ENCODE measurements at regions of chr3 and their contacts with region 1.

Region 1: DNA sequence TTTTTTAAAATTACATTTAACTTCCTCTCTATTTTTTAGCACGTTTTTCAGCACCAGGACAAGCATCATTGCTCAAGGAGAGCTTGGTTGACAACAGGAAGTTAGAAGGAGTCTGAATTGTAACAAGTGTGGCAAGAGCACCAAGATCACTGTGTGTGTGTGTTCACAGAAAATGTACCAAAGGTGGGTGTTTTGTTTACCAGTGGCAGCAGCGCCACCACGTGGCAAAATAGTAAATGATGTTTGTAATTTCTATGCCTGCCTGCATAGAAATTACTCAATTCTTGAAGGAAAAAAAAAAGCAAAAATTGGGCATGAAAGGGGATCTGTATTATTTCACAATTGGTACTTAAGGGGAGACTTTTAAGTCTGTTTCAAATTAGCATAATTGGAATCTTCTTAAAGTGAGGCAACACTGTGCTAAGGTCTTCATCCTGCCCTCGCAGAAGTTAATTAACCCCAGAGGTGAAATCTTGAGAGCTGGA is 7.4 kb upstream of the U2SURP start:
- DNase-seq: peak in 4 of 5 donors; percentile 32 to 67 (median 50)
- ATAC-seq: peak in 3 of 4 donors; percentile 30 to 50 (median 33)
- H3K4me3 ChIP-seq: no peak overlapping the region
- H3K27ac ChIP-seq: no peak overlapping the region
- H3K4me1 ChIP-seq: peaks cover 0 to 15% (median 0%) of the 10 kb centered on the region in 12 donors
- H3K27me3 ChIP-seq: no peaks in the 10 kb centered on the region
- CTCF ChIP-seq: peak; percentile 48 to 80 (median 70)
- POLR2A ChIP-seq: no peak

Region 2: DNA sequence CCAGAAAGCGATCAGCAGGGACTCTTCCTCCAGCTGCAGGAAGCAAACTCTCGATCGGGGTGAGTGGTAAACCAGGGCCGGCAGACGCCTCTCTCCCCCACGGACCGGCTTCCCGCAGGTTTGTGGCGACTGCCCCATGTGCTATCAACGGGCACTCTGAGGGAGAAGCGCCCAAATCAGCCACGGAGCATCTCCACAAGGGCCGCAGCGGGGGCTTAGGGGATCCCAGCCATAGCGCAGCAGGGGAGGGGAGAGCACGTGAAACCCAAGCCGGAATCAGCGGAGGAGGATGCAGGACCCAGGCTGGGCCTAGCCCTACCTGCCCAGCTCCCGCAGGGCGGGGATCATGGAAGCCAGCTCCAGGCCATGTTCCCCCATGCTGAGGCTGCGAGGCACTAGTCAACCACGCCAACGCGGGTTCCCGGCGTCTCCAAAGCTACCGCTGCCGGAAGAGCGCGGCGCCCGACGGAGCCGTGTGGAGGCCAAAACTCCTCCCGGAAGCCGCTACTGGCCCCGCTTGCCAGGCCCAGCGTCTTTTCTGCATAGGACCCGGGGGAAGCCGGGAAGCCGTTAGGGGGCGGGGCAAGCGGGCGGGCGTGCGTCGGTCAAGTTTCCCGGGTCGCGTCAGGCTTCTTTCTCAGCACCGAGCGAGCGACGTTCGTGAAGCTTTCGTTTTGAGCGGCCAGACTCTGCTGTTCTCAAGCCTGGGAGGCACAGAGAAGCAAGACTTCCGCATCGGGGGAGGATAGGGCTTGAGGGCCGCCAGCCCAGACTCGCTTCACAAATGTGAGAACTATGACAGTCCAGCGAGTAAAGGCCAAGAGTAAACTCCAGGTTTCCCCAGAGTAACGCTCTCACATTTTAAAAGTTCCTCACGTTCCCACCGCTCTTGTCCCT is 415.4 kb before region 1 on chr3 and contains the start of gene ATR:
- intact Hi-C with region 1: loop called in 1 of 10 experiments (anchors 2 kb)
- DNase-seq: peak; percentile 97 to 98 (median 98)
- ATAC-seq: peak; percentile 99
- H3K4me3 ChIP-seq: peak within 1 kb of the TSS; percentile 53 to 97 (median 88)
- H3K27ac ChIP-seq: peak within 1 kb of the TSS; percentile 72 to 97 (median 91)
- H3K4me1 ChIP-seq: peaks cover 0 to 50% (median 24%) of the 10 kb centered on the region in 12 donors
- H3K27me3 ChIP-seq: no peaks in the 10 kb centered on the region
- CTCF ChIP-seq: peak in 3 of 12 donors; percentile 8 to 18 (median 16)
- POLR2A ChIP-seq: no peak
- total RNA-seq, gene ATR: 10.3 to 17.0 (median 11.1) TPM

Region 3: GRCh38 chr3:142586803-142587406 is 407.1 kb before region 1 on chr3:
- intact Hi-C with region 1: loop called (anchors 2 to 5 kb)
- DNase-seq: peak in 1 of 5 donors; percentile 32
- ATAC-seq: peak; percentile 28 to 83 (median 74)
- H3K4me3 ChIP-seq: no peak overlapping the region
- H3K27ac ChIP-seq: no peak overlapping the region
- H3K4me1 ChIP-seq: no peaks in the 10 kb centered on the region
- H3K27me3 ChIP-seq: peaks cover 0 to 3% (median 0%) of the 10 kb centered on the region in 9 donors
- CTCF ChIP-seq: peak; percentile 43 to 70 (median 62)
- POLR2A ChIP-seq: no peak

Region 4: DNA sequence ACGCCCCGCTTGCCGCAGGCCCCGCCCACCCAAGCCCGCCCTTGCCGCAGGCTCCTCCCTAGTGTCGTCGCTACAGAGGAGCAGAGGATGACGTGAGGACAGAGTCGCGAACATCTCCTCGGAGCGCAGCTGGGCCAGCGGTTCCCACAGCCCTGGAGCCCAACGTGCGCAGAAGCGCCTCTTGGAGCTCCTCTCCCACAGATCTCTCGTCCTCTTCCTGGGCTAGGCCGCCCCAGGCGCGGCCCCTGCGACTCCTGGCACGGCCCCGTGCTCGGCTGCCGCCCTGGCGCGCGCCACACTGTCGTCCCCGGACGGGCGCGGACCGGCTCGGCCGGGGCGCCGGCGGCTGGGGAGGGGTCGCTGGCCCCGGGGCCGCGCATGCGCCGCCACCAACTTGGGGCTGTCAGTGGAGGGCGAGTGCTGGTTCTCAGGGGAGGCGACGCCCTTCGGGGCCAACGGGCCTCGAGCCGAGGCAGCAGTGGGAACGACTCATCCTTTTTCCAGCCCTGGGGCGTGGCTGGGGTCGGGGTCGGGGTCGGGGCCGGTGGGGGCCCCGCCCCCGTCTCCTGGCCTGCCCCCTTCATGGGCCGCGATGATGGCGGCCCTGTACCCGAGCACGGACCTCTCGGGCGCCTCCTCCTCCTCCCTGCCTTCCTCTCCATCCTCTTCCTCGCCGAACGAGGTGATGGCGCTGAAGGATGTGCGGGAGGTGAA is 269.9 kb before region 1 on chr3 and contains the start of gene TRPC1:
- intact Hi-C with region 1: loop called in 1 of 10 experiments (anchors 10 kb)
- DNase-seq: peak; percentile 77 to 84 (median 83)
- ATAC-seq: peak; percentile 80 to 96 (median 94)
- H3K4me3 ChIP-seq: peak within 1 kb of the TSS; percentile 72 to 96 (median 80)
- H3K27ac ChIP-seq: peak within 1 kb of the TSS; percentile 82 to 99 (median 91)
- H3K4me1 ChIP-seq: peaks cover 0 to 21% (median 6%) of the 10 kb centered on the region in 12 donors
- H3K27me3 ChIP-seq: peaks cover 0 to 14% (median 0%) of the 10 kb centered on the region in 9 donors
- CTCF ChIP-seq: no peak
- POLR2A ChIP-seq: peak; percentile 86 to 92
- total RNA-seq, gene TRPC1: 5.9 to 14.2 (median 11.2) TPM

Region 5: DNA sequence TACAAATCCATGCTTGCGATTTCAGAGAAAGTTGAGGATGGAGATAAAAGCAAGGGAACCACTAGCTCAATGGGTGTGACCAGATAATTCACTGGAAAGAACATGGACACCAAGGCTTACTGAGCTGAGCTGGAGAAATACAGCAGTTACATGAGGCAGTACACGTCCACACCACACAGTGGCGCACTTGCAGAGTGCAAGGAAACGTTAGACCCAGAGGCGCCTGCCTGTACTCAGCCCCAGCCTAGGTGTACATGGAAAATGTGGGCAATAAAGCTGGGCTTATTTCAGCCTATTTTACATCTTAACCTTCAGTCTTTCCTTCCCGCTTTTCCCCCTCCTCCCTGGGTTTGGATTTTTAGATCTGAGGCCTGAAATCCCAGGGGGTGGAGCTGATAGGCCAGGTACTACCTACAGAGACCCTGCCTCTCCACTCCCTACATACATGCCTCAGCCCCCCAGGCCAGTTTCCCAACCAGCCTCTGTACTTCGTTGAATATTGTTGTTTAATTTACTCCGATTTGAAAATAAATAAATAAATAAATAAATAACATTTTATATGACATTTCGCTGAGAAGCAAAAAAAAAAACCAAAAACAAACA is 165.2 kb before region 1 on chr3:
- intact Hi-C with region 1: loop called (anchors 1 to 5 kb)
- DNase-seq: peak; percentile 67 to 87 (median 75)
- ATAC-seq: peak; percentile 78 to 97 (median 96)
- H3K4me3 ChIP-seq: no peak overlapping the region
- H3K27ac ChIP-seq: no peak overlapping the region
- H3K4me1 ChIP-seq: peaks cover 0 to 5% (median 0%) of the 10 kb centered on the region in 12 donors
- H3K27me3 ChIP-seq: no peaks in the 10 kb centered on the region
- CTCF ChIP-seq: peak; percentile 74 to 84 (median 80)
- POLR2A ChIP-seq: no peak

Region 6: GRCh38 chr3:142844339-142844977 is 149.5 kb before region 1 on chr3:
- intact Hi-C with region 1: loop called in 2 of 10 experiments (anchors 5 kb)
- DNase-seq: no peak
- ATAC-seq: no peak
- H3K4me3 ChIP-seq: no peak overlapping the region
- H3K27ac ChIP-seq: no peak overlapping the region
- H3K4me1 ChIP-seq: peaks cover 0 to 13% (median 4%) of the 10 kb centered on the region in 12 donors
- H3K27me3 ChIP-seq: no peaks in the 10 kb centered on the region
- CTCF ChIP-seq: peak in 8 of 12 donors; percentile 20 to 48 (median 36)
- POLR2A ChIP-seq: no peak

Region 7: GRCh38 chr3:142929109-142929508 is 64.9 kb before region 1 on chr3:
- intact Hi-C with region 1: loop called in 3 of 10 experiments (anchors 2 to 5 kb)
- DNase-seq: peak in 2 of 5 donors; percentile 50 to 66
- ATAC-seq: peak; percentile 71 to 82 (median 78)
- H3K4me3 ChIP-seq: no peak overlapping the region
- H3K27ac ChIP-seq: no peak overlapping the region
- H3K4me1 ChIP-seq: peaks cover 0 to 6% (median 0%) of the 10 kb centered on the region in 12 donors
- H3K27me3 ChIP-seq: no peaks in the 10 kb centered on the region
- CTCF ChIP-seq: peak; percentile 23 to 58 (median 44)
- POLR2A ChIP-seq: no peak

Measured in heart left ventricle (tissue), 16 donors.